Naive thymus-derived CD4-positive, alpha-beta T cell (primary cell): ENCODE measurements at regions of chr2 and their contacts with region 1.

Region 1: DNA sequence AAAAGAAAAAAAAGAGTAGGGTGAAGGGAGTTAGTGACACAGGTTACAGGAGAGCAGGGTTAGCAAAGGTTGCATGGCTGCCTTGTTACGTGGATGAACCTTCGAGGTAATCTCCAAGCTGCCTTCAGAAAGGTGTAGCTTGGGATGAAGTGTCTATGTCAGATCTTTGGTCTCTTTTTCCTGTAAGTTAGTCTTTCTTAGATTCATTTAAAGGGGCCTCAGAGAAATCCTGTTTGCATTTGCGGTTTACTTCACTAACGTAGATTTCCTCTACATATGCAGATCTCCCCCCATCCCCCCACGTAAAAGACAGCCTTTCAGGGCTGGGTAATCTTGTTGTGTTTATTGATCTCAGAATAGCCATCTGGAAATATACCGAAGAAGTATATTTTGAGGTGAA is 83.7 kb downstream of the MTA3 start:
- DNase-seq: peak in 7 of 9 donors; percentile 71 to 85 (median 80)
- ATAC-seq: peak; percentile 83
- H3K4me3 ChIP-seq: peak overlapping the region; percentile 41
- H3K4me3 Mint-ChIP-seq: peak overlapping the region; percentile 70 to 86 (median 76)
- H3K27ac ChIP-seq: peak overlapping the region; percentile 71
- H3K27ac Mint-ChIP-seq: peak overlapping the region; percentile 78 to 99 (median 96)
- H3K4me1 ChIP-seq: peaks cover 0 to 69% of the 10 kb centered on the region in 2 donors
- H3K4me1 Mint-ChIP-seq: peaks cover 24 to 96% (median 68%) of the 10 kb centered on the region in 7 donors
- H3K27me3 ChIP-seq: no peaks in the 10 kb centered on the region
- H3K27me3 Mint-ChIP-seq: no peaks in the 10 kb centered on the region

Region 2: GRCh38 chr2:42568401-42569115 is 83.5 kb before region 1 on chr2 and contains the start of gene MTA3:
- CTCF ChIA-PET with region 1: no interaction called
- POLR2A ChIA-PET with region 1: no interaction called
- intact Hi-C with region 1: loop called in 1 of 2 experiments (anchors 2 kb)
- DNase-seq: peak; percentile 51 to 76 (median 67)
- ATAC-seq: peak; percentile 85
- H3K4me3 ChIP-seq: peak within 1 kb of the TSS; percentile 52
- H3K4me3 Mint-ChIP-seq: peak within 1 kb of the TSS; percentile 89 to 99 (median 94)
- H3K27ac ChIP-seq: peak within 1 kb of the TSS; percentile 74
- H3K27ac Mint-ChIP-seq: peak within 1 kb of the TSS; percentile 88 to 97 (median 94)
- H3K4me1 ChIP-seq: peaks cover 8 to 19% of the 10 kb centered on the region in 2 donors
- H3K4me1 Mint-ChIP-seq: peaks cover 11 to 50% (median 41%) of the 10 kb centered on the region in 7 donors
- H3K27me3 ChIP-seq: no peaks in the 10 kb centered on the region
- H3K27me3 Mint-ChIP-seq: no peaks in the 10 kb centered on the region
- total RNA-seq, gene MTA3: 23.9 to 49.1 (median 34.3) TPM

Region 3: DNA sequence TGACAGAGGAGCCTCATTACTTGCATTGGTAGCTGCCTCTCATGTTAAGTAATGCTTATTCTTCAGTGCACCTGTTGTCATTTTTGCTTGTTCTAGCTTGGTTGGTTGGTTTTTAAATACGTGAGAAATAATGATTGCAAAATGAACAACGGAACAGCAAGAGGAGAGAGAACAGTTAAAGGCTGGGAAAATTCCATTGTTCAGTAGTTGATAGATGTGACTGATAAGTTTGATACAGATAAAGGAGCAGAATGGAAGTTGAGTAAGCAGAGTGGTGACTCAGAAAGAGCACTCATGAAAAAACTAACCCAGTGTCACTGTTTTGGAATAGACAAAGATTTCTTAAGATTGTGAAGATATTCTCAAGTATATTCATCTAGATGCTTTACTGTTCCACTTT is 33.1 kb before region 1 on chr2:
- CTCF ChIA-PET with region 1: no interaction called
- POLR2A ChIA-PET with region 1: no interaction called
- intact Hi-C with region 1: loop called in 1 of 2 experiments (anchors 5 kb)
- DNase-seq: no peak
- ATAC-seq: no peak
- H3K4me3 ChIP-seq: no peak overlapping the region
- H3K4me3 Mint-ChIP-seq: no peak overlapping the region
- H3K27ac ChIP-seq: no peak overlapping the region
- H3K27ac Mint-ChIP-seq: peak overlapping the region; percentile 1 to 84 (median 48)
- H3K4me1 ChIP-seq: no peaks in the 10 kb centered on the region
- H3K4me1 Mint-ChIP-seq: peaks cover 2 to 23% (median 11%) of the 10 kb centered on the region in 7 donors
- H3K27me3 ChIP-seq: no peaks in the 10 kb centered on the region
- H3K27me3 Mint-ChIP-seq: no peaks in the 10 kb centered on the region

Region 4: GRCh38 chr2:42639340-42640077 is 12.6 kb before region 1 on chr2:
- CTCF ChIA-PET with region 1: interaction called, 7 read pairs
- POLR2A ChIA-PET with region 1: interaction called, 5 read pairs
- intact Hi-C with region 1: loop called in 1 of 2 experiments (anchors 1 kb)
- DNase-seq: no peak
- ATAC-seq: no peak
- H3K4me3 ChIP-seq: no peak overlapping the region
- H3K4me3 Mint-ChIP-seq: peak overlapping the region; percentile 25 to 72 (median 66)
- H3K27ac ChIP-seq: no peak overlapping the region
- H3K27ac Mint-ChIP-seq: peak overlapping the region in 8 of 9 donors; percentile 25 to 90 (median 70)
- H3K4me1 ChIP-seq: peaks cover 0 to 4% of the 10 kb centered on the region in 2 donors
- H3K4me1 Mint-ChIP-seq: peaks cover 7 to 38% (median 20%) of the 10 kb centered on the region in 7 donors
- H3K27me3 ChIP-seq: no peaks in the 10 kb centered on the region
- H3K27me3 Mint-ChIP-seq: no peaks in the 10 kb centered on the region